ENCODE measurements at regions of chr20 and their contacts with region 1.

Region 1: GRCh38 chr20:57414867-57415592 is 23.8 kb downstream of the RBM38 start:
- DNase-seq: no peak
- H3K4me3 ChIP-seq: no peak overlapping the region
- H3K27ac ChIP-seq: no peak overlapping the region
- H3K4me1 ChIP-seq: no peaks in the 10 kb centered on the region
- H3K27me3 ChIP-seq: no peaks in the 10 kb centered on the region
- CTCF ChIP-seq: no peak

Region 2: GRCh38 chr20:57374931-57375651 is 39.9 kb before region 1 on chr20:
- CTCF ChIA-PET with region 1: no interaction called
- dilution Hi-C with region 1: loop called (anchors 5 kb)
- in situ Hi-C with region 1: no loop called
- intact Hi-C with region 1: no loop called
- DNase-seq: no peak
- H3K4me3 ChIP-seq: no peak overlapping the region
- H3K27ac ChIP-seq: no peak overlapping the region
- H3K4me1 ChIP-seq: no peaks in the 10 kb centered on the region
- H3K27me3 ChIP-seq: no peaks in the 10 kb centered on the region
- CTCF ChIP-seq: no peak

Measured in mammary epithelial cell (primary cell).